WTC11 (cell line): ENCODE measurements at regions of chr17 and their contacts with region 1.

Region 1: DNA sequence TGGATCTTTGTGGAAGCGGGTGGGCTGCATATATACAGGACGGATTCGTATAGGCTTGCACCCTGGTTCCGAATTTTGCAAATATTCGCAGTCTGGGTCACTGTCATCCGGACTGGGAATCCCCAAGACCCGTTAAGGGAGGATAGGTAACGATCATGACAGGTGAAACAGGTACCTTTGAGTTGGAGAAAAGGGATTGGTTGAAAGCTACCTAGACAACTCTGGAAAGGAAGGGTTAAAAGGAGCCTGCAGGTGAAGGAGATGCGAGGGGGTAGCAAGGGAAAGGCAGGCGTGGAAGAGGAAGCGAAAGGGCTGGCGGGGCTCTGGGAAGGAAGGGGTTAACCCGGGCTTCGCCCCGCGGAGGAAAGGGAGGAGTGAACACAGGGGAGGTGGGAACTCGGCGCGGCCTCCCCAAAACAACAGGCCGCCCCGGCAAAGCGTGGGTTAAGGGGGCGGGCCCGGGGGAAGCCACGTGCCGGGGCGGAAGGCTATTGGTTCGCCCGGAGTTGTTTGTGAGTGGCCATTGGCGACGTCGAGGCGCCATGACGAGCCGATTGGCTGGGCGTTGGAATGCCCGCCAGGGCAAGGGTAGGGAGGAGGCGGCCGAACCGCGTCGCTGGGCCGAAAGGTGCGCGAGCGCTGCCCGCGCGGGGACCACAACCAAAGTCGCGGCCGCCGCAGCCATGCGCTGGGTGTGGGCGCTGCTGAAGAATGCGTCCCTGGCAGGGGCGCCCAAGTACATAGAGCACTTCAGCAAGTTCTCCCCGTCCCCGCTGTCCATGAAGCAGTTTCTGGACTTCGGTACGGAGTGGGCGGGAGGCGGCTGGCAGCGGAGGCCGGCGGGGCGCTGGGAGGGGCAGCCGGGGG is at the start of gene PDK2:
- DNase-seq: peak; percentile 95
- ATAC-seq: peak; percentile 93
- H3K4me3 Mint-ChIP-seq: peak within 1 kb of the TSS; percentile 97
- H3K27ac Mint-ChIP-seq: peak within 1 kb of the TSS; percentile 41
- H3K4me1 Mint-ChIP-seq: peaks cover 6% of the 10 kb centered on the region
- H3K27me3 Mint-ChIP-seq: no peaks in the 10 kb centered on the region
- CTCF ChIP-seq: no peak
- total RNA-seq, gene PDK2: 16.6 to 21.3 TPM (median 19.8 TPM) in 3 replicates

Region 2: GRCh38 chr17:50020841-50021599 is 74.0 kb before region 1 on chr17:
- CTCF ChIA-PET with region 1: interaction called, 46 read pairs
- POLR2A ChIA-PET with region 1: no interaction called
- DNase-seq: no peak
- ATAC-seq: no peak
- H3K4me3 Mint-ChIP-seq: no peak overlapping the region
- H3K27ac Mint-ChIP-seq: no peak overlapping the region
- H3K4me1 Mint-ChIP-seq: no peaks in the 10 kb centered on the region
- H3K27me3 Mint-ChIP-seq: peaks cover 13% of the 10 kb centered on the region
- CTCF ChIP-seq: no peak

Region 3: GRCh38 chr17:50055426-50056230 is 39.4 kb before region 1 on chr17 and contains the start of gene ITGA3:
- CTCF ChIA-PET with region 1: interaction called, 29 read pairs
- POLR2A ChIA-PET with region 1: interaction called, 3 read pairs
- DNase-seq: peak; percentile 90
- ATAC-seq: peak; percentile 65
- H3K4me3 Mint-ChIP-seq: peak within 1 kb of the TSS; percentile 89
- H3K27ac Mint-ChIP-seq: peak within 1 kb of the TSS; percentile 99
- H3K4me1 Mint-ChIP-seq: peaks cover 56% of the 10 kb centered on the region
- H3K27me3 Mint-ChIP-seq: peaks cover 22% of the 10 kb centered on the region
- CTCF ChIP-seq: no peak
- total RNA-seq, gene ITGA3: 35.3 to 44.2 TPM (median 35.5 TPM) in 3 replicates

Region 4: GRCh38 chr17:50114849-50115357 is 19.9 kb after region 1 on chr17:
- CTCF ChIA-PET with region 1: interaction called, 118 read pairs
- POLR2A ChIA-PET with region 1: interaction called, 5 read pairs
- DNase-seq: peak; percentile 55
- ATAC-seq: peak; percentile 55
- H3K4me3 Mint-ChIP-seq: peak overlapping the region; percentile 1; the same call in 1 of the 2 replicates
- H3K27ac Mint-ChIP-seq: no peak overlapping the region
- H3K4me1 Mint-ChIP-seq: peaks cover 21% of the 10 kb centered on the region
- H3K27me3 Mint-ChIP-seq: peaks cover 44% of the 10 kb centered on the region
- CTCF ChIP-seq: peak; percentile 40; the same call in 1 of the 2 replicates

Region 5: DNA sequence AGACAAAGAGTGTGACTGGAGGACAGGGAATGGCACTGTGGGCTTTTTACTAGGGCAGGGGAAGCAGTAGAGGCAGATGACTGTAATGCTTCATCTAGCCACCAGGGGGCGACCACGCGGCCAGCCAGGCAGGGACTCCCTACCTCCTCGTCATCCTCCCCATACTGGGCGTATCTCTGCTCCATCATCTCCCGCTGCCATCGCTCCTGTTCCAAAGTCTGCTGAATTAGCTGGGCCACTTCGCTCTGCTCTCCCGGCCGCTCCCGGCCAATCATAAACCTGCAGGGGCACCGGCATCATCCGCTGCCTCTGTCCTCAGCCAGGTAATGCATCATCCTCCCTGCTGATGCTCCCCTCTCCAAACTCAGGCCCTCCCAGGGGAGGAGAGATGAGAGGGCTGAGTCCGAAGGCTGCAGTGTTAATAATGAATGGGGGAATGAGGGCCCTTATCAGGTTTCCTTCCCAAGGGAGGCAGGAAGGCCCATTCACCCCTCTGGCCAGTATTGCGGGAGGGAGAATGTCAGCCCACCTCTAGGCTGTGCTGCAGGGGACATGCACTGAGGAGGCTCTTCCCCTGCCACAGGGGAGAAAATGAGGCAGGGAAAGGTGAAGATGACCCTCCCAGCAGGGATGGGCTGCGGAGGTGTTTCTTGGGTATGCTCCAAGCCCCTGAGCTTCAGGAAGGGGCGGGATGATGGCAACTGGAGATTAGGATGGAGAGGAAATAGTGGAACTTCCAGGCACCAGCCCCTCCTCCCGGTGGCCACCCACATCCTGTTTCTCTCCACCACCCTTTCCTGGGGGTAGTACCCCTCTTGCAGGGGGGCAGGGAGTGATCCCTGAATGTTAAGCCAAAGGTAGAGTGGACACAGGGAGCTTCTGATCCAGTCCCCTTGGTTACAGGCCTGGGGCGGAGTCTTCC is 45.2 kb after region 1 on chr17:
- CTCF ChIA-PET with region 1: interaction called, 10 read pairs
- POLR2A ChIA-PET with region 1: no interaction called
- DNase-seq: peak; percentile 90
- ATAC-seq: peak; percentile 91
- H3K4me3 Mint-ChIP-seq: 0 out of 2 replicates have a peak overlapping the region, but pooled peaks have one; percentile 14
- H3K27ac Mint-ChIP-seq: no peak overlapping the region
- H3K4me1 Mint-ChIP-seq: peaks cover 14% of the 10 kb centered on the region
- H3K27me3 Mint-ChIP-seq: no peaks in the 10 kb centered on the region
- CTCF ChIP-seq: peak; percentile 99

Region 6: GRCh38 chr17:50169121-50169764 is 74.3 kb after region 1 on chr17:
- CTCF ChIA-PET with region 1: interaction called, 13 read pairs
- POLR2A ChIA-PET with region 1: no interaction called
- DNase-seq: peak; percentile 71
- ATAC-seq: peak; percentile 74
- H3K4me3 Mint-ChIP-seq: no peak overlapping the region
- H3K27ac Mint-ChIP-seq: no peak overlapping the region
- H3K4me1 Mint-ChIP-seq: peaks cover 13% of the 10 kb centered on the region
- H3K27me3 Mint-ChIP-seq: no peaks in the 10 kb centered on the region
- CTCF ChIP-seq: peak; percentile 44